Motor neuron (in vitro differentiated cells): ENCODE measurements at regions of chr2 and their contacts with region 1.

Region 1: DNA sequence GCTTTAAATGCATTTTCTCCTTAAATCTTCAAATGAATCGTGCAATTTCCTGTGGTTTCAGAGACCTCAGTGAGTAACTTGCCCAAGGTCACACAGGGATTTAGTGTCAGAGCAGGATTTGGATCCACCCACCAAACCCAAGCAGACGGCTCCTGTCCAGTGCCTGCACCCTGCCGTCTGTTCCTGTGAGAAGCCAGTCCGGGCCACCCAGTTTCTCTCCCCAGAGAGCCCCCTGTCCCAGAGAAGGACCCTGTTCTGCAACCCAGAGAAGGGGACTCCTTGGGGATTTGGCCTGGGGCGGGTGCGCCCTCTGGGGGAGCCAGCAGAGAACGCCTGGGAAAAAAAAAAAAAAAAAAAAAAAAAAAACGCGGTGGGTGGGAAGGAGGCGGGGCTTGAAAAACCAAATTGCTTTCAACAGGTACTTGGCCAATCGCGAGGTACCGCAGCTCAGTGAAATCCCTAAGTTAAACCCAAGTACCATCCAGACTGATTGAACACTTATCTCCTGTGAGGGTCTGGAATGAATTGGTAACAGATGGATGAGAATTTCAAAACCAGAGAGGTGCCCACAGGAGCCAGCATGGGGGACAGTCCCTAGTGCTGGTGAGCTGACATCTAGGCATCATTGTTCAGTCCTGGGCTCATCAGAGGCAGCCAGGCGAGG is 30.9 kb upstream of the REEP1 start:
- ATAC-seq: peak; percentile 27 to 84 (median 71)
- H3K4me3 ChIP-seq: no peak overlapping the region
- H3K27ac ChIP-seq: no peak overlapping the region
- H3K4me1 ChIP-seq: no peaks in the 10 kb centered on the region

Region 2: DNA sequence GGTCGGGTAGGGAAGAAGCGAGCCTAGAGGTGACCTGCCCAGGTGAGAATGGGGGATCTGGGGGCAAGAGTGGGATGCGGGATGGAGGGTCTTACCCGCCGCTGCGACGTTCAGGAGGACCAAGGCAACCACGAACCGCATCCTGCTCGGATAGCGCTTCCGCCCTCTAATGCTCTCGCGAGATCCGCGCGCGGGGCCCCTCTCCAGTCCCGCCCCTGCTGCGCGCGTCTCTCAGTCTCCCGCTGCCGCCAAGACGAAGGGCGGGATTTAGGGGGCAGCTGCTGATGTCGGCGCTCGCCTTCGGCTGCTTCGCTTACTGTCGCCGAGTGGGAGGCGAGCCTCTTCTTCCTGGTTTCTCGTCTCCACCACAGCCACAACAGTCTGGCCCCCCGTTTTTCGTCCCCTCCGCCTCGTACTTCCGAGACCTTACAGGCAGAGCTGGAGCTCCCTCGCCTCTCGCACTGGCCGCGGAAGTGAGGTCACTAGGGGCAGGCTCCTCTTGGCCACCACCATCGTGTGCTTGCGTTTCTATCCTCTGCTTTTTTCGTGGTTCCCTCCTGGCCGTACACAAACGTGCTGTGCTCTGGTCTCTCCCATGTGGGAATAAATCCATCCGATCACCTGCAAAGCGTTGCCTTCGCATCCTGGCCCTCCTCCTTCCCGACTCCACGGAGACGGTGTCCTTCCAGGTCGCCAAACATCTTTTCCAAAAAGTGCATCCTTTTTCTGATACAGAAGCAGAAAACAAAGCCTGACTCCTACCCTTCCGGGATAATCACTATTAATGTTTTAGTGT is 1040.3 kb before region 1 on chr2 and contains the start of gene TGOLN2:
- in situ Hi-C with region 1: no loop called
- ATAC-seq: peak; percentile 95 to 98 (median 98)
- H3K4me3 ChIP-seq: peak within 1 kb of the TSS; percentile 50 to 81 (median 75)
- H3K27ac ChIP-seq: peak within 1 kb of the TSS; percentile 92 to 94
- H3K4me1 ChIP-seq: peaks cover 20 to 23% of the 10 kb centered on the region in 2 donors
- total RNA-seq, gene TGOLN2: 26.6 to 89.1 (median 50.9) TPM

Region 3: GRCh38 chr2:86221066-86221684 is 147.1 kb before region 1 on chr2:
- in situ Hi-C with region 1: loop called in 3 of 9 experiments (anchors 25 kb)
- ATAC-seq: peak in 3 of 8 experiments; percentile 6 to 63 (median 7)
- H3K4me3 ChIP-seq: no peak overlapping the region
- H3K27ac ChIP-seq: no peak overlapping the region
- H3K4me1 ChIP-seq: peaks cover 29 to 37% of the 10 kb centered on the region in 2 donors

Region 4: GRCh38 chr2:86249579-86250391 is 118.5 kb before region 1 on chr2:
- in situ Hi-C with region 1: loop called in 2 of 9 experiments (anchors 25 kb)
- ATAC-seq: peak; percentile 67 to 98 (median 79)
- H3K4me3 ChIP-seq: no peak overlapping the region
- H3K27ac ChIP-seq: no peak overlapping the region
- H3K4me1 ChIP-seq: peaks cover 3% of the 10 kb centered on the region in 2 donors

Region 5: GRCh38 chr2:86584151-86584913 is 216.0 kb after region 1 on chr2:
- in situ Hi-C with region 1: no loop called
- ATAC-seq: no peak
- H3K4me3 ChIP-seq: no peak overlapping the region
- H3K27ac ChIP-seq: no peak overlapping the region
- H3K4me1 ChIP-seq: no peaks in the 10 kb centered on the region